ENCODE measurements at regions of chr6 and their contacts with region 1.

Region 1: GRCh38 chr6:17505062-17505476 is 95.0 kb upstream of the FAM8A1 start:
- DNase-seq: peak in 1 of 2 experiments; percentile 43
- H3K4me3 ChIP-seq: no peak overlapping the region
- H3K27ac ChIP-seq: no peak overlapping the region
- H3K4me1 ChIP-seq: 0 out of 7 replicates have a peak, but pooled peaks cover 0 to 3% (median 0%) of the 10 kb centered on the region in 4 experiments
- H3K27me3 ChIP-seq: no peaks in the 10 kb centered on the region
- CTCF ChIP-seq: peak in 2 of 3 experiments; percentile 35 to 37; a peak in 2 of 4 replicates
- EP300 ChIP-seq: no peak
- POLR2A ChIP-seq: no peak
- RAD21 ChIP-seq: peak; percentile 9 to 27; a peak in 3 of 4 replicates

Region 2: DNA sequence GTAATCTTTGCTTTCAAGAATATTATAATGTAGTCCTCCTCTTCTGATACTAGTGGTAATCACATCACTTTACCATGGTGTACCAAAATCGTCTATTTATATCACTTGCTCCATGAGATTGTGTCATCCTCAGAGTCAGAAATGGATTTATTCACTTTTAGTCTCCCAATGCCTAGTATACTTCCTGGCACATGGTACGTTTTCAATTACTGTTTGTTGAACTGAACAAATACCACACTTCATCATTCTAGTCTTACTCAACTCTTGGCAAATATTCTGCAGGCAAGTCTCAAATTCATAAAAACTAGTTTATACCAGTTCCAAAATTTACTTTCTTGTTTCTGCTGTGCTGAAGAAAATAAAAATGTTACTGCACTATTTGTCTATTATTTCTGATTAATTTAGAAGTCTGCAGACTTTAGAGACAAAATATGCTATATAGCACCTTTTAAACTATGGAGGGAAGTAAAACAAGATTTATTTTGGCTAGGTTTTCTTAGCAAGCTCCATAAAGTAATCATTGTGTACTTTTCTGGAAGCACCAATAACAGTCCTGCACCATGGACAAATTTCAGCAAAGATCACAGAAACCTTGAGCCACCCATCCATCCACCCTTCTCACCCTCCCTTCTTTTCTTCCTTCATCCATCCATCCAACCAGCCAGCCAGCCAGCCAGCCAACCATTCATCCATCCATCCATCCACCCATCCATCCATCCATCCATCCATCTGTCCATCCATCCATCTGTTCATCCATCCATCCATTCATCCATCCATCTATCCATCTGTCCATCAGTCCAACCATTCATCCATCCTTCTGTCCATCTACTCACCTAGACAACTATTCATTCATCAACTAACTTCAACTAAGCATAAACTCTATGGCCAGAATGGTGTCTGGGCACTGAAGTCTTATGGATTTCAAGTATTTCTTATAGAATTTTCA is 505.3 kb before region 1 on chr6:
- CTCF ChIA-PET with region 1: no interaction called
- POLR2A ChIA-PET with region 1: no interaction called
- DNase-seq: no peak
- H3K4me3 ChIP-seq: no peak overlapping the region
- H3K27ac ChIP-seq: no peak overlapping the region
- H3K4me1 ChIP-seq: no peaks in the 10 kb centered on the region
- H3K27me3 ChIP-seq: no peaks in the 10 kb centered on the region
- CTCF ChIP-seq: no peak
- EP300 ChIP-seq: no peak
- POLR2A ChIP-seq: no peak
- RAD21 ChIP-seq: no peak

Region 3: GRCh38 chr6:17417817-17418216 is 87.3 kb before region 1 on chr6:
- CTCF ChIA-PET with region 1: interaction called, 16 read pairs
- POLR2A ChIA-PET with region 1: no interaction called
- DNase-seq: peak in 1 of 2 experiments; percentile 63
- H3K4me3 ChIP-seq: no peak overlapping the region; a peak in 1 of 8 replicates
- H3K27ac ChIP-seq: peak overlapping the region; percentile 47; the same call in 1 of the 2 replicates
- H3K4me1 ChIP-seq: peaks cover 0 to 7% (median 3%) of the 10 kb centered on the region in 4 experiments; a peak in 4 of 7 replicates
- H3K27me3 ChIP-seq: no peaks in the 10 kb centered on the region
- CTCF ChIP-seq: no peak
- EP300 ChIP-seq: peak in 1 of 2 experiments; percentile 59; a peak in 1 of 3 replicates
- POLR2A ChIP-seq: no peak
- RAD21 ChIP-seq: no peak

Region 4: DNA sequence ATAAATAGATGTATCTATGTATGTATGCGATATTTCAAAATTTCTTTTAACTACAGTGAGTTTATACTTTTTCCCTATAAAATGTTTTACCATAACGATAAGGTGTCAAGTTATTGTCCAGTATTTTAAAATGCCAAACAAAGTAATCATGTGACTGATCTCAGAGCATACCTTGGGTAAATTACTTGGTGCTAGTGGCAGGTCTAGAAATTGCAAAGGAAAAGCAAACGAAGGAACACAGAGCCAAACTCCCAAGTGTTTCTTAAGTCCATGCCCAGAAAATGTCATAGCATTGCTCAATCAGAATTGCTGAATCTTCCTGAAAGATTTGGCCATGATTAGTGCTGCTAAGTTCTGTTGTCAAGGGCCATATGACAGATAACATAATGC is 34.1 kb before region 1 on chr6:
- CTCF ChIA-PET with region 1: interaction called, 13 read pairs
- POLR2A ChIA-PET with region 1: no interaction called
- DNase-seq: no peak
- H3K4me3 ChIP-seq: no peak overlapping the region
- H3K27ac ChIP-seq: no peak overlapping the region
- H3K4me1 ChIP-seq: no peaks in the 10 kb centered on the region
- H3K27me3 ChIP-seq: no peaks in the 10 kb centered on the region
- CTCF ChIP-seq: no peak
- EP300 ChIP-seq: no peak
- POLR2A ChIP-seq: no peak
- RAD21 ChIP-seq: no peak

Region 5: DNA sequence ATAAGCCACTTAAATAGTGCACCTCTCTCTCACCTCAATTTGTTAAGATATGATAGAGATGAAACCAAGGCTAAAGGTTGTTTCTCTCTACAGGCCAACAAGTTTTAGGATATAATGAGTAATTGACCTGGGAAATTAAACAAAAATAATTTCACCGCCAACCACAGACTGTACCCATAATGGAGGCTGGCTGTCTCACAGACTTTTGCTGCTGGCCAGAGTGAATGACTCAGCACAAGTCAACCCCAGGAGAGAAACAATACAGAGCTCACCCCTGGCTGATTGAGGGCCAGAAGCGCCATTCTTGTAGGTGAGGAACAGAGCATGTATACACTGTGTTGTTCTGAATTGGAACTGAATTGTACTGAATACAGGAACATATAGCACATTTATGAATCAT is 11.8 kb before region 1 on chr6:
- CTCF ChIA-PET with region 1: interaction called, 48 read pairs
- POLR2A ChIA-PET with region 1: no interaction called
- DNase-seq: no peak
- H3K4me3 ChIP-seq: no peak overlapping the region
- H3K27ac ChIP-seq: no peak overlapping the region
- H3K4me1 ChIP-seq: no peaks in the 10 kb centered on the region
- H3K27me3 ChIP-seq: no peaks in the 10 kb centered on the region
- CTCF ChIP-seq: no peak
- EP300 ChIP-seq: no peak
- POLR2A ChIP-seq: no peak
- RAD21 ChIP-seq: no peak

Region 6: DNA sequence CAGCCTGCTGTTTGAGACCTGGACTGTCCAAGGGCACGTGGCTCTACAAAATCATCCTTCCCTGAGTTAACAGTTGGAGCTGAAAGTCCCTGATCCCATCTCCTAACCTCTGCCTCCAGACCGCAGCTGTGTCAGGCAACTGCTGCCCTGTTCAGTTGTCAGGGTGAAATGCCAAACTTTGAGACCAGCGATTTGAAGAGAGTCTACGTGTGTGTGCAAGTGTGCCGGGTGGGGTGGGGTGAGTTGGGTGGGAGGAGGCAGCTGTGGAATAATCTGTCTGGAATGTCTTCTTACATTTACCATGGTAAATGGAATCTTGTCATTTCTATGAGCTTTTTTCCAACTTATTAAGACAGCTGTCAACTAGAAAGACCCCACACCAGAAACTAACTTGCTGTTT is 14.1 kb after region 1 on chr6:
- CTCF ChIA-PET with region 1: interaction called, 33 read pairs
- POLR2A ChIA-PET with region 1: no interaction called
- DNase-seq: no peak
- H3K4me3 ChIP-seq: no peak overlapping the region
- H3K27ac ChIP-seq: no peak overlapping the region
- H3K4me1 ChIP-seq: no peaks in the 10 kb centered on the region
- H3K27me3 ChIP-seq: no peaks in the 10 kb centered on the region
- CTCF ChIP-seq: no peak
- EP300 ChIP-seq: no peak
- POLR2A ChIP-seq: no peak
- RAD21 ChIP-seq: no peak

Region 7: DNA sequence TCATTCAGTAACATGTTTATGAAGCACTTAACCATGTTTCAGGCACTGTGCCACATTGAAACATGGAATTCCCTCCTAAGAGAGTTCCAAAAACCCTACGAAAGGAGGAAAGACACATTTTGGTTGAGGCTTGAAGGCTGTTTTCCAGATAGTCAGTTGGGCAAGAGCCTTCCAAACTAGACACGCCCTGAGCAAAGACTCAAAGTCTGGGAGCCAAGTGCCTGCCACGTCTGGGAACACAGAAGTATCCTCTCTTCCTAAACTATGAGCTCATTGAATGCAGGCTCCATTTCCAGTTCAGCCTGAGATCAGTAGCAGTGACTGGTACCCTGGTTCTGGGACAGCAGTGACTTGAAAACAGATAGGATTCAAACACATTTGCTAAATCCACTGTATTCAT is 20.6 kb after region 1 on chr6:
- CTCF ChIA-PET with region 1: interaction called, 17 read pairs
- POLR2A ChIA-PET with region 1: no interaction called
- DNase-seq: no peak
- H3K4me3 ChIP-seq: no peak overlapping the region
- H3K27ac ChIP-seq: no peak overlapping the region
- H3K4me1 ChIP-seq: no peaks in the 10 kb centered on the region
- H3K27me3 ChIP-seq: no peaks in the 10 kb centered on the region
- CTCF ChIP-seq: no peak
- EP300 ChIP-seq: no peak
- POLR2A ChIP-seq: no peak
- RAD21 ChIP-seq: no peak